ENCODE measurements at regions of chr13 and their contacts with region 1.

Region 1: DNA sequence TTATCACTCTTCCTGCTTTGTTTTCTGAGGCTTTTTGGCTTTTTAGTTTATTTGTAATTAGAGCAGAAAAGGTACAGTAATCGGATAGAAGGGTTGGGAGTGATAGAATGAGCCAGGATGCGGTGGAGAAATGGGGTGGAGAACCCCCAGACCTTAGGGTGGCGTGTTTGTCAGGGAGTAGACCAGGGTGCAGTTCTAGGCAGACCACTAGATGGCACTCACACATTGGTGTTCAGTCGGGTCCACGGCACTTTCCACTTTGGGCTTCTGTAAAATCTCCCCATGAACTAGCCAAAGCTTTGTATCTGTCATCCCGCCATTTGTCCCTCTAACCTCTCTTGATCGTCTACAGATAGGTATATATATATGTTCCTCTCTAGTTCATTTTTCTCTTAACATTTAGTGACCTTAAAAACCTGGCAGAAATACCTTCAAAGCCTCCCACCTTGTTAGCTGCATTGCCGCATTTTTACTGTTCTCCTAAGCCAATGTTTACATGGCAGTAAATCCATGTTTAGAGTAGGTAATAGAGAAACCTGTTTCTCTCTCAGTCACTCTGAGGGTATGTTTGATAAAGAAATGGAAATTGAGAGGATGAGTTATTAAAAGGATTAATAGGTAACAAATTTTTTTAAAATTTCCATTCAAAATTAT is 154.9 kb downstream of the TM9SF2 start:
- DNase-seq: peak; percentile 71
- H3K4me3 Mint-ChIP-seq: peak overlapping the region; percentile 9
- H3K27ac Mint-ChIP-seq: no peak overlapping the region
- H3K4me1 Mint-ChIP-seq: peaks cover 38% of the 10 kb centered on the region
- H3K27me3 Mint-ChIP-seq: peaks cover 46% of the 10 kb centered on the region

Region 2: GRCh38 chr13:99626461-99627082 is 29.6 kb before region 1 on chr13:
- intact Hi-C with region 1: no loop called
- DNase-seq: no peak
- H3K4me3 Mint-ChIP-seq: no peak overlapping the region
- H3K27ac Mint-ChIP-seq: no peak overlapping the region
- H3K4me1 Mint-ChIP-seq: peaks cover 3% of the 10 kb centered on the region
- H3K27me3 Mint-ChIP-seq: peaks cover 18% of the 10 kb centered on the region

Region 3: DNA sequence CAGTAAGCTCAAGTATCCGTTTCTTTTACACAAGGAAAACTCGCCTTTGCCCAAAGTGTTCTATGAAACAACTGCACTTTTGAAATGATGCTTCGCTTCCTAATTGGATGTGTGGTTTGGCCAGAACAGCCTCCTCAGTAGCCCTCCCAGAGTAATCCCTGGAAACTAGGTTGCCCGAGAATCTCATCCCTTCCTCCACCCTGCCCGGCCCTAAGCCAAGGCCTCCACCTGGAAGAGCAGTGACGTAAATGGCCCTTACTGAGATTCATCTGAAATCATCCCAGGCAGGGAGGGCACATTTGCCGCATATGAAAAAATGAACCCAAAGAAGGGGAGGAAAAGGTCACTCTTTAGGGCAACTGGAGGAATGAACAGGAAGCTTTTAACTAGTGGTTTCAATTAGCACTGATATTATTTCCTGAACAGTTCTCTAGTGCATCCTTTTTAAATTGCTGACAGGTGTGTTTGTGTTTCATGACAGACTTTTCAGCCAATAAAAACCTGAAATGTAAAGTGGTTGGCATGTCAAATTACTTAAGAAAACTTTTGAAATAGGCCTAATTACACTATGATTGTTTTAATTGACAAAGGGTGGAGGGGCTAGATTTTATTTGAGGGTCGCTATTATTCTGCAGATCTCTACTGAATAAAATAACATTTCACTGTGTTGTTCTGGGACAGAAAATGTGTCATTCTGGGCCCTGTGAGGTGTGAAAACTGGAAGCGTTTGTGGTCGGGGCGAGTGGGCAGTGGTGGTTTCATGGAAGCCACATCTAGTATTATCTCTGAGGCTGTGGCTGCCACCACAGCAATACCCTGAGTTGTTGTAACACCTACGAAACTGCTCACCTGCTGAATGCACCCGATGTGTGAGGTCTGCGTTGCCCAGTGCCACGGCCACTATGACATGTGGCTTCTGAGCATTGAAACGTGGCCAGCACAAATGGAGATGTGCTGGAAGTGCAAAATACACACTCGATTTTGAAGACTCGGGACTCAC is 203.3 kb after region 1 on chr13:
- intact Hi-C with region 1: loop called (anchors 1 kb)
- DNase-seq: no peak
- H3K4me3 Mint-ChIP-seq: no peak overlapping the region
- H3K27ac Mint-ChIP-seq: peak overlapping the region; percentile 17
- H3K4me1 Mint-ChIP-seq: peaks cover 10% of the 10 kb centered on the region
- H3K27me3 Mint-ChIP-seq: peaks cover 69% of the 10 kb centered on the region

Region 4: GRCh38 chr13:99916366-99917103 is 260.3 kb after region 1 on chr13:
- intact Hi-C with region 1: loop called (anchors 5 kb)
- DNase-seq: no peak
- H3K4me3 Mint-ChIP-seq: no peak overlapping the region
- H3K27ac Mint-ChIP-seq: no peak overlapping the region
- H3K4me1 Mint-ChIP-seq: peaks cover 6% of the 10 kb centered on the region
- H3K27me3 Mint-ChIP-seq: peaks cover 39% of the 10 kb centered on the region

Region 5: DNA sequence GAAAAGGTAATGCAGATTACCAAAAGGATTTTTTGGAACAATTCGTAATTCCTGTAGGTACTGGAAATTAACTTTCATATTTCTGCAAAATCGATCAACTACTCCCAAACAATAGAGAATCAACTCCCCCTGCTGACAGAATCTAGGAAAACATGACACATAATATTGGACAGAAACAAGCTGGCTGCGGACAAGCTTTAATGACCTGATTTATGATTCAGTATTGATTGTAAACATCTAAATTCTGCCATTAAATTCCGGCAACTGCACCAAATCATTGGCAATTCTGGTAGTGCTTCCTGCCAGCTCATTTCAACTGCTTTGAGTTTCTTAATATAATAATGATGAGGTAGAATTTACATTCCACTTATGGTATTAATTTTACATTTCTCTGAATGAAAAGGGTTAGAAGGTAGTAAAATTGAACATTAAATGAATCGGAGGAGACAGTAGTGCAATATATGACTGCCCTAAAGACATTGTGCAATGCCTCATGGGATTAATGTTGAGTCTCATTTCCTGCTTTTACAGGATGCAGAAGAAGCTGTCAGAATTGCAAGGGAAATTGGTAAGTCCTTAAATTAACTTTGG is 579.2 kb after region 1 on chr13:
- intact Hi-C with region 1: loop called (anchors 2 kb)
- DNase-seq: no peak
- H3K4me3 Mint-ChIP-seq: no peak overlapping the region
- H3K27ac Mint-ChIP-seq: no peak overlapping the region
- H3K4me1 Mint-ChIP-seq: peaks cover 4% of the 10 kb centered on the region
- H3K27me3 Mint-ChIP-seq: peaks cover 19% of the 10 kb centered on the region

Region 6: GRCh38 chr13:100434010-100434763 is 778.0 kb after region 1 on chr13:
- intact Hi-C with region 1: loop called (anchors 5 kb)
- DNase-seq: no peak
- H3K4me3 Mint-ChIP-seq: no peak overlapping the region
- H3K27ac Mint-ChIP-seq: peak overlapping the region; percentile 35
- H3K4me1 Mint-ChIP-seq: peaks cover 36% of the 10 kb centered on the region
- H3K27me3 Mint-ChIP-seq: no peaks in the 10 kb centered on the region

Region 7: DNA sequence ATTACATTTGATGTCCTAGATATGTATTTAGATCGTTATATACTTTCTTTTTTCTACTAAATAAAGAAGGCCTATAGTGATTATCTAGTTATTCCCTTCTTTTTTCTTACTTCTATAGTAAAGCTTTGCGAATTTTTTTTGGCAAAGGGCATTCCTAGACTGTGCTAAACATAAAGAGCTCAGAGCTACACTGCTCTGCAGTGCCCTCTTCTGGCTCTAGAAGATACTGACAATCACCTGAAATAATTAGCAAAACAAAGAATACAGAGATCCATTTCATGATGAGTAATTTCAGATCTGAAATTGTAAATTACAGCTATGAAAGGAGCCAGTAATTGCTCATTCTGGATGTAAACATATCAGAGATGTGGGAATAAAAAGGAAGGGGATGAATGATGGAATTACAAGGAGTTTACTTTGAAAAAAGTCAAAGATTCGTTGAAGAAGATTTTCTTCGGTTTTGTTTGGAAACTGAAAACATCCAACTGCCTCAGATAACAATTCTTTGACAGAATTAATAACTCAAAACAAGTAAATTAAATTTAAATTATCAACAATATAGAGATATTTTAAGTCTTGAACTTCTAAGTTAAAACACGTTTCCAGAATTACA is 1471.6 kb after region 1 on chr13:
- intact Hi-C with region 1: loop called (anchors 5 kb)
- DNase-seq: no peak
- H3K4me3 Mint-ChIP-seq: no peak overlapping the region
- H3K27ac Mint-ChIP-seq: no peak overlapping the region
- H3K4me1 Mint-ChIP-seq: no peaks in the 10 kb centered on the region
- H3K27me3 Mint-ChIP-seq: no peaks in the 10 kb centered on the region

Measured in activated T-helper 2 cell treated with anti-CD3 and anti-CD28 coated beads, Interferon-gamma antibody, Interleukin-2, Interleukin-4, amounts not matched to agents 10 μg/mL and 5 μg/mL and 100 μg/mL, durations not matched to agents 14 hours and 24 hours and 36 hours (primary cell).